Cardiac septum (tissue), 1 donor: ENCODE measurements at regions of chr1 and their contacts with region 1.

Region 1: DNA sequence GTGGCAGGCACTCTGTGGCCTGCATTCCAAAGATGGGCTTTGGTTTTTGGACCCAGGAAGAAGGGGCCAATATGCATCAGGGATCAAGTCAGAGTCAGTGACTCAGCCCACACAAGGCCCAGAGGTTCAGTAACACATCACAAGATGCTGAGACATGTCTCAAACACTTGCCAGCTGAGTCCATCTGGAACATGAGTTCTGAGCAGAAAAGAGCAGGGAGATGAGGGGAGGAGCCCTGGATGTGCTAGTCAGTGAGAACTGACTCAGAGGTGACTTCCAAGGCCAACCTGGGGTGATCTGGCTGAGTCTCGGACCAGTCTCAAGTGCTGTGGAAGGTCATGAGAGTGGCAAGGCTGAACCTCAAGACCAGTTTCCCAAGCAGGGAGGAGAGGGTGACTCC is 150.1 kb downstream of the CDC7 start:
- DNase-seq: no peak

Region 2: DNA sequence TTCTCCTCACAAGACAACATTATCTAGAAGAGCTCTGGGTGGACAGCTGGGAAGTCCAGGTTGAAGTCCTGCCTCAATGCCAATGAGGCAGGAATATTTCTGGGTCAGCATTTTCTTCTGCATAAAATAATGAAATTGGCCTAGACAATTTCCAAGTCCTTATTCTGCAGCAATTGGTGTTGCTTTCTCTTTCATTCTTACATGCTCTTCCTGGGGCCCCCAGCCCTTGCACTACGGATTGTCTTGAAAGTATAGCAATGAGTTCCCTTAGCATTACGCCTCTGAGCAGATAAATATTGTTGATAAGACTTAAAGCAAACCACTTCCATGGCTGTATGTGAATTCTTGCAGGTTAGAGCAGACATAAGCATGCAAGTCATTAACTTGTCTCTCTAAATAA is 46.7 kb after region 1 on chr1:
- intact Hi-C with region 1: loop called (anchors 5 kb)
- DNase-seq: no peak

Region 3: GRCh38 chr1:91751275-91751674 is 100.5 kb after region 1 on chr1:
- intact Hi-C with region 1: loop called (anchors 2 kb)
- DNase-seq: peak; percentile 66

Region 4: DNA sequence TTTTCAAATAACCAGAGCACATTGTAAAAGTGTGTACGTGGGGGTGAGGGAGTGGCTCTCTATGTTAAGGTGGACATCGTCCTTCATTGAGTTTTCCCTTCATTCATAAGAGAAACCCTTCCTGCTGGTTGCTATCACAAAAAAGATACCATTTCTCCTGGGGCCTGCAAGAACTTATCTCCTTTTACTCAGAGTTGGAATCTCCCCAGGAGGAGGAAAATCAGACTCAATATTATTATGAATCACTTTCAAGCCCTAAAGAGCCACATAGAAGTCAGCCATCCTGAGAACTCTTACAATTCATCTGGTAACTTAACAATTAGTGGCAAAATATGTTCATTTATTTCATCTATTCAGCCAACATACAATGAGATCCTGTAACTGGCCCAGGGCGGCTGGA is 262.3 kb after region 1 on chr1:
- intact Hi-C with region 1: no loop called
- DNase-seq: no peak

Region 5: DNA sequence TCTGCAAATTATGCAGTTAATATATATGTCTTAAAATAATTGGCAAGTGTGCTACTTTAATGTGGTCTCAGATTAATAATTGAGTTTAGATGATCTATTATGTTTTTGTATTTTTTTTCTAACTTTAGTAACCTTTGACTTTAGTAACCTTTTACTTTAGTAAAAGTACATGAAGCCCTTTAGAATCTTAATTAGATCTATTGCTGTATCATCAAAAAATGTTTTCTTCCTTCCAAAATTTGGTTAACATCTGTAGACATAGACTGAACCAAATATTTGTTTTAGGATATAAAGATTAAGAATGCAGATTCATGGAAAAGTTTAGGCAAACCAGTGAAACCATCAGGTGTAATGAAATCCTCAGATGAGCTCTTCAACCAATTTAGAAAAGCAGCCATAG is 353.4 kb after region 1 on chr1:
- intact Hi-C with region 1: no loop called
- DNase-seq: no peak